ENCODE measurements at regions of chr18 and their contacts with region 1.

Region 1: GRCh38 chr18:54679318-54680149 is 88.5 kb downstream of the DYNAP start:
- DNase-seq: no peak
- ATAC-seq: no peak
- H3K4me3 ChIP-seq: no peak overlapping the region
- H3K27ac ChIP-seq: no peak overlapping the region
- H3K4me1 ChIP-seq: no peaks in the 10 kb centered on the region
- H3K27me3 ChIP-seq: no peaks in the 10 kb centered on the region
- CTCF ChIP-seq: no peak

Region 2: GRCh38 chr18:54558609-54559585 is 120.6 kb before region 1 on chr18:
- intact Hi-C with region 1: loop called in 1 of 2 experiments (anchors 10 kb)
- DNase-seq: no peak
- ATAC-seq: peak in 1 of 4 donors; percentile 62
- H3K4me3 ChIP-seq: no peak overlapping the region
- H3K27ac ChIP-seq: no peak overlapping the region
- H3K4me1 ChIP-seq: no peaks in the 10 kb centered on the region
- H3K27me3 ChIP-seq: no peaks in the 10 kb centered on the region
- CTCF ChIP-seq: peak; percentile 46

Region 3: DNA sequence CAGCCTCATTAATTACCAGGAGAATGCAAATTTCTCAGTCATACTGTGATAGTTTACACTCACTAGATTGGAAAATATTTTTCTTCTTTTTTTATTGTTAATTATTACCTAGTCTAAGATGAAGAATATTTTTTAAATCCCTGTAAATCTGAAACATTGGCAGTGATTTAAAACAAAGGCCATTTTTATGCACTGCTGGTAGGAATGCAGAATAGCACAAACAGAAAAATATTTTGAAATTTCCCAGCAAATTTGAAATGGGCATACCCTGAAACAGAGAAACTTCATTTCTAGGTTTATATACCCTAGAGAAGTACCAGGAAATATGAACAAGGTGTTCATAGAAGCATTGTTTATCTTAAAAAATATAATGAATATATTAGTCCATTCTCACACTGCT is 57.5 kb before region 1 on chr18:
- intact Hi-C with region 1: no loop called
- DNase-seq: no peak
- ATAC-seq: no peak
- H3K4me3 ChIP-seq: no peak overlapping the region
- H3K27ac ChIP-seq: no peak overlapping the region
- H3K4me1 ChIP-seq: no peaks in the 10 kb centered on the region
- H3K27me3 ChIP-seq: no peaks in the 10 kb centered on the region
- CTCF ChIP-seq: no peak

Region 4: DNA sequence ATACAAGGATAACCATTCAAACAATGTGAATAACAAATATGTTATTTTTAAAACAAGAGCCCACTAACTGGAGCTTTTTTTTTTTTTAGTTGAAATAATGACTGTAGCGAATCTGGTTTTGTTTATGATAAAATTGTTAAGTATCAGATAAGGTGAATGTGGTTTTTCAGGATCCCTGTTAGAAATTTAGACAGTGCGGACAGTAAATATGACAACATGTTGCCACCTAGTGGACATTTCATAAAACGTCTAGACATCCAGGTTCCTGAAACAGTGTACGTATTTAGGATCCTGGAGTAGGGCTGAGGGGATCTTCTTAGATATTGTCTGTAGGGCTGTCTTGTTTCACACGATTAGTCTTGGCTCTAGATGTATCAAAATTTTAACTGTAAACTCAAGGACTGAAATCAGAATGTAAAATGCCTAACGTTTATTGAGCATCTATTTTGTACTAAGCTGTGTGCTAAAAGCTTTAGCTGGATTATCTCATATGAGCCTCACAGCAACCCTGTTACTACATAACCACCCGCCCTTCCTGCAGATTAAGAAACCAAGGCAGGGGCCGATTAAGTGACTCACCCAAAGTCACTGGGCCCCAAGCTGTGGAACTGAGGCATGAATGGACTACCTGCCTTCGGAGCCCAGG is 303.6 kb after region 1 on chr18:
- intact Hi-C with region 1: loop called in 1 of 2 experiments (anchors 5 kb)
- DNase-seq: no peak
- ATAC-seq: peak in 1 of 4 donors; percentile 44
- H3K4me3 ChIP-seq: no peak overlapping the region
- H3K27ac ChIP-seq: no peak overlapping the region
- H3K4me1 ChIP-seq: no peaks in the 10 kb centered on the region
- H3K27me3 ChIP-seq: peaks cover 0 to 2% (median 0%) of the 10 kb centered on the region in 3 donors
- CTCF ChIP-seq: peak; percentile 56

Measured in psoas muscle (tissue), 8 donors.